Naive thymus-derived CD4-positive, alpha-beta T cell (primary cell): ENCODE measurements at regions of chr3 and their contacts with region 1.

Region 1: GRCh38 chr3:102113411-102114041 is 264.2 kb downstream of the NFKBIZ start:
- DNase-seq: peak in 1 of 9 donors; percentile 16
- ATAC-seq: no peak
- H3K4me3 ChIP-seq: no peak overlapping the region
- H3K4me3 Mint-ChIP-seq: peak overlapping the region in 9 of 10 donors; percentile 6 to 63 (median 26)
- H3K27ac ChIP-seq: peak overlapping the region; percentile 69
- H3K27ac Mint-ChIP-seq: peak overlapping the region; percentile 88 to 99 (median 93)
- H3K4me1 ChIP-seq: peaks cover 0 to 29% of the 10 kb centered on the region in 2 donors
- H3K4me1 Mint-ChIP-seq: peaks cover 9 to 61% (median 44%) of the 10 kb centered on the region in 7 donors
- H3K27me3 ChIP-seq: no peaks in the 10 kb centered on the region
- H3K27me3 Mint-ChIP-seq: no peaks in the 10 kb centered on the region

Region 2: DNA sequence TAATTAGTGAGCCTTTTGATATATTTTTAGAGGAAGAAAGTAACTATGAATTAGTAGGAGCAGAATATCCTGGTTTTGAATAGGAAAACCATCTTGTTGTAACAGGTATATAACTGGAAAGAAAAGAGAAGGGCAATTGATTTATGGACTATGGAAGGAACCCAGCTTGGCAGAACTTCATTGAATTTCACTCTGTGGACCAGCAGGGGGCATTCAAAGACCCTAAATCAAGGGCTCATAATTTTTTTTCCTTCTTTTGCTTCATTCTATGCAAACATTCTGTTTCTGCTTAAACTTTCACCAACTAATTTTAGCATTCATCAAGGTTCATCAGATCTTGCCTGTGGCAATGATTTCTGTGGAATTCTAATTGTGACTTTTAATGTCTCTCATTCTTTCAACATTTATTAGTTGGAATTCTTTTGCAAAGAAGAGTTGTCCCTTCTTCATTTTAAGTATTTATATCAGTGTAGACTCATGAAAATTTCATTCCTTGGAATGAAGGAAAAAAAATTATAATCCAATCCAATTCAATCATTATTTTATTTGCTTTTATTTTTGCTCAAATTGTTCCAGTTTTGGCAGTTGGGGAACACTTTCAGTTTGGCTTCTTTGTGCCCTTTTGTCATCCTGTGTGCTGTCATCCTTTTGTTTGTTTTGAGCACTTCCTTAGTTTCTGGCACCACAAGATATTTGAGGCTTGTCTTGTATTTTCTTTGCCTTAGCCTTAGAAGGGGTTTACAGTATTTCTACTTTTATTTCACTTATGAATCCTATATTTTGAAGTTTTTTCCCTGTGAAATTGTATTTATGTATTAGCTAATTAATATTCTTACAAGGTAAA is 304.1 kb before region 1 on chr3:
- CTCF ChIA-PET with region 1: no interaction called
- POLR2A ChIA-PET with region 1: no interaction called
- intact Hi-C with region 1: loop called (anchors 5 kb)
- DNase-seq: peak in 7 of 9 donors; percentile 31 to 67 (median 57)
- ATAC-seq: peak; percentile 88
- H3K4me3 ChIP-seq: no peak overlapping the region
- H3K4me3 Mint-ChIP-seq: peak overlapping the region in 8 of 10 donors; percentile 23 to 66 (median 60)
- H3K27ac ChIP-seq: peak overlapping the region; percentile 34
- H3K27ac Mint-ChIP-seq: peak overlapping the region; percentile 51 to 93 (median 87)
- H3K4me1 ChIP-seq: peaks cover 0 to 27% of the 10 kb centered on the region in 2 donors
- H3K4me1 Mint-ChIP-seq: peaks cover 11 to 62% (median 54%) of the 10 kb centered on the region in 7 donors
- H3K27me3 ChIP-seq: no peaks in the 10 kb centered on the region
- H3K27me3 Mint-ChIP-seq: no peaks in the 10 kb centered on the region

Region 3: DNA sequence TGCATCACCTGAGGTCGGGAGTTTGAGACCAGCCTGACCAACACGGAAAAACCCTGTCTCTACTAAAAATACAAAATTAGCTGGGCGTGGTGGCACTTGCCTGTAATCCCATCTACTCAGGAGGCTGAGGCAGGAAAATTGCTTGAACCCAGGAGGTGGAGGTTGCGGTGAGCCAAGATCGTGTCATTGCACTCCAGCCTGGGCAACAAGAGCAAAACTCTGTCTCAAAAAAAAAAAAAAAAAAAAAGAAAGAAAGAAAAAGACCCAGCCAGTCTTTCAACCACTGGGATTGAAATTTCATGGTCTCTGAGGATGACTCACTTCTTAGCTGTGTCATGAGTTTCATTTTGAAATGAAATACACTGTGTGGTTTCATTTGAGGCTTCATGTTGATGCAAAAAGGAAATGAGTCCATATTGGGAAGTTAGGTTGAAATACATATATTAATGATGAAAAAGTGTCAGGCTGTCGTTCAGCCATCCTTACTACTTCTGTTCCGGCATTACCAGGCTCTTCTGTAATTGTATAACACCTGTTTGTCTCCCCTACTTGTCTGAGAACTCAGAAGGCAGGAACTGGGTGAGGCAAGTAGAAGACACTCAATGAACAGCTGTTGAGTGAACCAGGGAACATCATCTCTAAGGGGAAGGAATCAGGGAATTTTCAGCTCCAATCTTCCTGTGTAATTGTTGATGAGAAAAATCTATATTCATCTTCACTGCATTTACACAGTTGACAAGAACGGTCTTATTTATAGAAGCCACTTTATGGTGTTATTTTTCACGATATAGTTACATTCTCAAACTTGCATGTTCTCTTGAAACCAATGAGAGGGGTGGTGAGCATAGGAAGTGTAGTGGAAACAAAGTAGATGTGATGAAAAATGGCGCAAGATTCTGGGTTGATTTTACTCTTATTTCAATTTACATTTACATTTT is 176.8 kb before region 1 on chr3:
- CTCF ChIA-PET with region 1: no interaction called
- POLR2A ChIA-PET with region 1: no interaction called
- intact Hi-C with region 1: loop called (anchors 1 to 2 kb)
- DNase-seq: peak in 8 of 9 donors; percentile 34 to 68 (median 58)
- ATAC-seq: peak; percentile 90
- H3K4me3 ChIP-seq: peak overlapping the region; percentile 9
- H3K4me3 Mint-ChIP-seq: peak overlapping the region in 9 of 10 donors; percentile 44 to 77 (median 72)
- H3K27ac ChIP-seq: no peak overlapping the region
- H3K27ac Mint-ChIP-seq: peak overlapping the region; percentile 76 to 91 (median 87)
- H3K4me1 ChIP-seq: peaks cover 28 to 56% of the 10 kb centered on the region in 2 donors
- H3K4me1 Mint-ChIP-seq: peaks cover 15 to 43% (median 30%) of the 10 kb centered on the region in 7 donors
- H3K27me3 ChIP-seq: no peaks in the 10 kb centered on the region
- H3K27me3 Mint-ChIP-seq: peaks cover 0 to 27% (median 0%) of the 10 kb centered on the region in 5 donors

Region 4: DNA sequence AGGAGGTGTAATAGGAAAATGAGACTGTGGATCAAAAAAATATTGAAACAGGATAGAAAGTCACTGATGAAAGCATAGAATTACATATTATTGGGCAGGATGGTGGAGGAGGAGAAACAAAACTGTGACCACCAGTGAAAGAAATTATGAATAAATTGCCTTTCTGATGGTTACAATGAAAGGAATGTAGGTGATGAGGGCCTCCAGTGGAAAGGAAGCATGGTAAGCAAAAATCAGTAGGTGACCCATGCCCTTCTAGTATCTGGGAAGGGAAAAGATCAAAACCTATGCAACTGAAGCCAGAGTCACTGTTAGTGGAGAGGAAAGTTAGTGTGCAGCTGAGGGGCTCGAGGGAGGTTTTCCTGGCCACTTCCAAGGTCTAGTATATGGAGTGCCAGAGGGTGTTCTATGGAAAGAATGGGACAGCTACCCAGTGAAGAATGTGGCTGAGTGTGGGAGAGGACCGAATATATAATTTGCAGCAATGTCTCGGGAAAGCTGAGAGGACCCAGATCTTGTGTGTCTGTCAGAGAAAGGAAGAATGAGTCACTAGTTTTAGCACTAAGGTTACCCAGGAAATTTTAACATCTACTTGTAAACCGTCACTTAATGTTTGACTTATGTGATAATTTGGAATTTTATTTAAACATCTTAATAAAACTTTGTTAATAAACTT is 118.0 kb before region 1 on chr3:
- CTCF ChIA-PET with region 1: no interaction called
- POLR2A ChIA-PET with region 1: no interaction called
- intact Hi-C with region 1: loop called in 1 of 2 experiments (anchors 5 kb)
- DNase-seq: no peak
- ATAC-seq: no peak
- H3K4me3 ChIP-seq: no peak overlapping the region
- H3K4me3 Mint-ChIP-seq: peak overlapping the region in 1 of 10 donors; percentile 37
- H3K27ac ChIP-seq: no peak overlapping the region
- H3K27ac Mint-ChIP-seq: peak overlapping the region in 3 of 9 donors; percentile 9 to 68 (median 11)
- H3K4me1 ChIP-seq: peaks cover 0 to 5% of the 10 kb centered on the region in 2 donors
- H3K4me1 Mint-ChIP-seq: peaks cover 6 to 26% (median 17%) of the 10 kb centered on the region in 7 donors
- H3K27me3 ChIP-seq: no peaks in the 10 kb centered on the region
- H3K27me3 Mint-ChIP-seq: peaks cover 0 to 22% (median 0%) of the 10 kb centered on the region in 5 donors

Region 5: GRCh38 chr3:102078854-102079253 is 34.7 kb before region 1 on chr3:
- CTCF ChIA-PET with region 1: interaction called, 11 read pairs
- POLR2A ChIA-PET with region 1: interaction called, 25 read pairs
- intact Hi-C with region 1: loop called (anchors 1 to 5 kb)
- DNase-seq: peak in 6 of 9 donors; percentile 36 to 64 (median 50)
- ATAC-seq: peak; percentile 72
- H3K4me3 ChIP-seq: peak overlapping the region; percentile 27
- H3K4me3 Mint-ChIP-seq: peak overlapping the region; percentile 47 to 82 (median 70)
- H3K27ac ChIP-seq: peak overlapping the region; percentile 74
- H3K27ac Mint-ChIP-seq: peak overlapping the region; percentile 85 to 99 (median 97)
- H3K4me1 ChIP-seq: peaks cover 0 to 44% of the 10 kb centered on the region in 2 donors
- H3K4me1 Mint-ChIP-seq: peaks cover 16 to 84% (median 72%) of the 10 kb centered on the region in 7 donors
- H3K27me3 ChIP-seq: no peaks in the 10 kb centered on the region
- H3K27me3 Mint-ChIP-seq: peaks cover 0 to 4% (median 0%) of the 10 kb centered on the region in 5 donors

Region 6: GRCh38 chr3:102129760-102130608 is 16.5 kb after region 1 on chr3:
- CTCF ChIA-PET with region 1: no interaction called
- POLR2A ChIA-PET with region 1: interaction called, 3 read pairs
- intact Hi-C with region 1: loop called in 1 of 2 experiments (anchors 1 kb)
- DNase-seq: peak in 2 of 9 donors; percentile 3 to 7
- ATAC-seq: peak; percentile 29
- H3K4me3 ChIP-seq: no peak overlapping the region
- H3K4me3 Mint-ChIP-seq: peak overlapping the region in 5 of 10 donors; percentile 19 to 75 (median 31)
- H3K27ac ChIP-seq: no peak overlapping the region
- H3K27ac Mint-ChIP-seq: peak overlapping the region; percentile 30 to 87 (median 75)
- H3K4me1 ChIP-seq: peaks cover 0 to 10% of the 10 kb centered on the region in 2 donors
- H3K4me1 Mint-ChIP-seq: peaks cover 3 to 26% (median 20%) of the 10 kb centered on the region in 7 donors
- H3K27me3 ChIP-seq: no peaks in the 10 kb centered on the region
- H3K27me3 Mint-ChIP-seq: no peaks in the 10 kb centered on the region